ENCODE measurements at regions of chr7 and their contacts with region 1.

Region 1: GRCh38 chr7:64183126-64183742 is 23.8 kb upstream of the ZNF735 start:
- DNase-seq: peak; percentile 58
- H3K4me3 Mint-ChIP-seq: no peak overlapping the region
- H3K27ac Mint-ChIP-seq: no peak overlapping the region
- H3K4me1 Mint-ChIP-seq: no peaks in the 10 kb centered on the region
- H3K27me3 Mint-ChIP-seq: peaks cover 8% of the 10 kb centered on the region

Region 2: GRCh38 chr7:64618785-64619456 is 435.7 kb after region 1 on chr7:
- CTCF ChIA-PET with region 1: interaction called, 13 read pairs
- POLR2A ChIA-PET with region 1: no interaction called
- intact Hi-C with region 1: loop called (anchors 1 kb)
- DNase-seq: no peak
- H3K4me3 Mint-ChIP-seq: no peak overlapping the region
- H3K27ac Mint-ChIP-seq: no peak overlapping the region
- H3K4me1 Mint-ChIP-seq: no peaks in the 10 kb centered on the region
- H3K27me3 Mint-ChIP-seq: no peaks in the 10 kb centered on the region

Region 3: GRCh38 chr7:64625114-64626082 is 442.2 kb after region 1 on chr7:
- CTCF ChIA-PET with region 1: interaction called, 13 read pairs
- POLR2A ChIA-PET with region 1: no interaction called
- intact Hi-C with region 1: loop called (anchors 1 kb)
- DNase-seq: no peak
- H3K4me3 Mint-ChIP-seq: no peak overlapping the region
- H3K27ac Mint-ChIP-seq: no peak overlapping the region
- H3K4me1 Mint-ChIP-seq: peaks cover 3% of the 10 kb centered on the region
- H3K27me3 Mint-ChIP-seq: no peaks in the 10 kb centered on the region

Measured in activated CD4-positive, alpha-beta memory T cell treated with anti-CD3 and anti-CD28 coated beads for 36 hours (primary cell).